WTC11 (cell line): ENCODE measurements at regions of chr19 and their contacts with region 1.

Region 1: GRCh38 chr19:20247016-20247683 is 80.1 kb downstream of the ZNF486 start:
- DNase-seq: peak; percentile 69
- ATAC-seq: peak; percentile 68
- H3K4me3 Mint-ChIP-seq: no peak overlapping the region
- H3K27ac Mint-ChIP-seq: no peak overlapping the region
- H3K4me1 Mint-ChIP-seq: peaks cover 51% of the 10 kb centered on the region
- H3K27me3 Mint-ChIP-seq: peaks cover 6% of the 10 kb centered on the region; the same call in 1 of the 2 replicates
- CTCF ChIP-seq: peak; percentile 41; the same call in 1 of the 2 replicates

Region 2: GRCh38 chr19:20259615-20260014 is 12.5 kb after region 1 on chr19:
- CTCF ChIA-PET with region 1: interaction called, 10 read pairs
- POLR2A ChIA-PET with region 1: no interaction called
- DNase-seq: no peak
- ATAC-seq: peak; percentile 89
- H3K4me3 Mint-ChIP-seq: peak overlapping the region; percentile 43
- H3K27ac Mint-ChIP-seq: peak overlapping the region; percentile 99
- H3K4me1 Mint-ChIP-seq: peaks cover 65% of the 10 kb centered on the region
- H3K27me3 Mint-ChIP-seq: no peaks in the 10 kb centered on the region
- CTCF ChIP-seq: no peak

Region 3: DNA sequence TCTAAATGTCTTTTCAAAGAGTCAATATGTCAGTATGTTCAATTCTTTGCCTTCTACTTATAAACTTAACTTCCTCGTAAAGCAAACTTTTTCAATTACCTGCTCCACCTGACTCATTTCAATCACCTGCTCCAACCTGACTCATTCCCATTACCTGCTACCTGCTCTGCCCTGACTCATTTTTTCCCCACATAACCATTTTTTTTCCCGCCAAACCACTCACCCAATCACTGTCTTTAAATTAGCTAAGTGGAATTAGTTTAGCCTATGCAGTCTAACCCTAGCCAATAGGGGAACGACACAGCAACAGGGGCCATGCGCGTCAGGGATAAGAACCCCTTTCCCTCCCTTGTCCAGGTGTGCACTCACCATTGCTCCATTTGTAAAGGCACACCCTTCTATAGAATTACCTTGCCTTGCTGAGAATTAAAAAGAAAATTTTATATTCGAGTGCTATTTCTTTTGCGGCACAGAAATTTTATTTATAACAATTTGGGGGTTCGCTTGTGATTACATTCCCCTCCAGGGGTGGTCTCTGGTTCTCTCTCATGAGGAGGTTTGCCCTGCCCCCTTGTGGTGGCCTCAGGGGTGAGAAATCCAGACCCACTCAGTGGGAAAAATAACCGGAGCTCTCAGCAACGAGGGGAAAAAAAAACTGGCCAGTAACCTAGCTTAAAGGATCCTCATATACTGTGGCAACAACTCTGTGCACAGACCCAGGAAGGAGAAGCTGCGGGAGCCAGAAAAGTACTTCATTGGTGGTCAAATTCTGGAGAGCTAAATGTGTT is 113.0 kb after region 1 on chr19:
- CTCF ChIA-PET with region 1: interaction called, 31 read pairs
- POLR2A ChIA-PET with region 1: no interaction called
- DNase-seq: peak; percentile 80
- ATAC-seq: peak; percentile 65
- H3K4me3 Mint-ChIP-seq: peak overlapping the region; percentile 24; the same call in 1 of the 2 replicates
- H3K27ac Mint-ChIP-seq: peak overlapping the region; percentile 14
- H3K4me1 Mint-ChIP-seq: peaks cover 57% of the 10 kb centered on the region
- H3K27me3 Mint-ChIP-seq: peaks cover 49% of the 10 kb centered on the region
- CTCF ChIP-seq: peak; percentile 78; the same call in 1 of the 2 replicates